Aorta (tissue), 5 donors: ENCODE measurements at regions of chr17 and their contacts with region 1.

Region 1: GRCh38 chr17:44829523-44830358 is at the start of gene GJC1:
- DNase-seq: peak; percentile 50 to 86
- ATAC-seq: peak; percentile 67
- H3K4me3 ChIP-seq: peak within 1 kb of the TSS; percentile 29 to 89
- H3K27ac ChIP-seq: peak within 1 kb of the TSS; percentile 15 to 24
- H3K4me1 ChIP-seq: peaks cover 0 to 4% of the 10 kb centered on the region in 2 donors
- H3K27me3 ChIP-seq: no peaks in the 10 kb centered on the region
- total RNA-seq, gene GJC1: 23.8 to 34.3 TPM

Region 2: DNA sequence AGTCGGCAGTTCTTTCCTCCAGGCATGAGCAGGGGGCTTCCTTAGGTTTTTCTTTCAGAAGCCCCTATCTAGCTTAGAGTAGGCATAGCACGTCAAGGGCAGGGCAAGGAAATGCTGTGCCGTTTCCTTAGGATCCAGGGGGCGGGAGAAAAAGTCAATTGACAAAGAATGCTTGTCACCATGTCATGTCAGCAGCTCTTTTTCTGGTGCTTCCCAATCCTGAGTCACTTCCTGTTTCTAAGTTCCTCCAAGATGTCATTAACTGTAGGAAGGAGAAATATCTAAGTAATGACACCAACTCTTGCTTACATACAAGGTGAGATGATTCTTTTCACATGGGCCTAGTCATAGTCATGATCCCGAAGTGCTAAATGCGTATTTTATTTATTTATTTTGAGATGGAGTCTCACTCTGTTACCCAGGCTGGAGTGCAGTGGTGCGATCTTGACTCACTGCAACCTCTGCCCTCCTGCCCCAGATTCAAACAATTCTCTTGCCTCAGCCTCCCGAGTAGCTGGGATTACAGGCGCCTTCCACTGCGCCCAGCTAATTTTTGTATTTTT is 34.8 kb before region 1 on chr17:
- intact Hi-C with region 1: loop called in 1 of 2 experiments (anchors 5 kb)
- DNase-seq: no peak
- ATAC-seq: peak; percentile 28
- H3K4me3 ChIP-seq: no peak overlapping the region
- H3K27ac ChIP-seq: peak overlapping the region; percentile 68 to 80
- H3K4me1 ChIP-seq: no peaks in the 10 kb centered on the region
- H3K27me3 ChIP-seq: no peaks in the 10 kb centered on the region

Region 3: DNA sequence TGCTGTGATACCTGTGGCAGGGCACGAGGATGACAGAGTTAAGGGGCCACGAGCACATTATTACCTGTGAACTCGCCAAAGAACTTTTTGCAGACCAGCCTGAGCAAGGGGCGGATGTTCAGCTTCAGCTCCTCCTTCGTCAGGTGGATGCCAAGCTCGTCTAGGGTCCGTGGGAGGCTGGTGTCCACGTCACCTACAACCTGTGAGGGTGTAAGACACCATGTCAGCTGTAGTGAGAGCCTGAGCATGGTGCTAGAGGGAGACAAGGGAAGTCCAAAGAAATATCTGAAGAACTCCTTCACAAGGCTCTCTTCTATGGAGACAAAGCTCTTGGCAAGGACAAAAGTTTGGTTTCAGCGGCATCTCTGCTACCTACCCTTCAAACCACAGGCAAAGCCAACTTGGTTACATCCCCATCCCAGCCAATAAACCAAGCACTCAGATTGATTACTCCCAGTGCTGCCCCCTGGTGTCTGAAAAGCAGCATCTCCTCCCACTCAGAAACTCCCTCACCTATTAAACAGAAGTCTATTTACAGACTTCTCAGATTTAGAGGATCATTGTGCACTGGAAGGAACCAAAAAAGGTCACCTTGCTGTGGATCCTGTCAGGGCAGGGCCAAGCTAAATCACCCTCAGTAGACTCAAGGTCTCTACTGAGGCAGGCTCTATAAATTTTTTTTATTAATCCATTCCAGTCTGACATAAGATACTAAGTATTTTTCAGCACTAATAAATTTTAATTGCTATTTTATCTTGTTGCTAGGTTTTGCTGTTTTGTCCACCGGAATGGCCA is 35.3 kb after region 1 on chr17:
- intact Hi-C with region 1: loop called in 1 of 2 experiments (anchors 5 kb)
- DNase-seq: peak; percentile 63 to 79
- ATAC-seq: peak; percentile 72
- H3K4me3 ChIP-seq: no peak overlapping the region
- H3K27ac ChIP-seq: no peak overlapping the region
- H3K4me1 ChIP-seq: no peaks in the 10 kb centered on the region
- H3K27me3 ChIP-seq: no peaks in the 10 kb centered on the region